IMR-90 (cell line): ENCODE measurements at regions of chr16 and their contacts with region 1.

Region 1: GRCh38 chr16:180938-181667 is 844 bp downstream of the HBQ1 start:
- DNase-seq: peak; percentile 58
- ATAC-seq: peak; percentile 79
- H3K4me3 ChIP-seq: peak overlapping the region; percentile 8
- H3K27ac ChIP-seq: no peak overlapping the region
- H3K4me1 ChIP-seq: peaks cover 5% of the 10 kb centered on the region; the same call in 1 of the 2 replicates
- H3K27me3 ChIP-seq: peaks cover 25% of the 10 kb centered on the region
- CTCF ChIP-seq: peak; percentile 90
- POLR2A ChIP-seq: no peak
- RAD21 ChIP-seq: peak; percentile 80

Region 2: GRCh38 chr16:138049-138417 is 43.1 kb before region 1 on chr16:
- CTCF ChIA-PET with region 1: no interaction called
- POLR2A ChIA-PET with region 1: no interaction called
- dilution Hi-C with region 1: no loop called
- in situ Hi-C with region 1: no loop called
- intact Hi-C with region 1: loop called (anchors 5 kb)
- DNase-seq: no peak
- ATAC-seq: peak; percentile 28
- H3K4me3 ChIP-seq: peak overlapping the region; percentile 88
- H3K27ac ChIP-seq: peak overlapping the region; percentile 96
- H3K4me1 ChIP-seq: peaks cover 4% of the 10 kb centered on the region; the same call in 1 of the 2 replicates
- H3K27me3 ChIP-seq: no peaks in the 10 kb centered on the region
- CTCF ChIP-seq: no peak
- POLR2A ChIP-seq: no peak
- RAD21 ChIP-seq: no peak